H1 (cell line): ENCODE measurements at regions of chr4 and their contacts with region 1.

Region 1: DNA sequence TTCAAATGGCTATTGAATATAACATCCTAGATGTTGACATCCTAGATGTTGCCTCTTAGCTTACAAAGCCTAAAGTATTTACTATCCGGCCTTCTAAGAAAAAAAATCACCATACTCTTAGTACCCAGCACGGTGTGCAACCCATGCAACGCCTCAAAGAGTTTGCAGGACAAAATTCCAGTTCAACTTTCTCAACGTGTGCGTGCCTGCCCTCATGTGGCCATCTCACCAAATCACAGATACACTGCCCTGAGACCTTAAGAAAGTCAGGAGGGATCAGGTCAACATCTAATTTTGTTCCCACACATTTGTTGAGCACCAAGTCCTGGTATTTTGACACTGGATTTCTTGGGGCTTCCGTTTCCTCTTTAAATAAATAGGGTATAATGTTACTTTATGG is 68.3 kb downstream of the CRMP1 start:
- DNase-seq: no peak
- H3K4me3 ChIP-seq: no peak overlapping the region
- H3K27ac ChIP-seq: no peak overlapping the region
- H3K4me1 ChIP-seq: no peaks in the 10 kb centered on the region
- H3K27me3 ChIP-seq: no peaks in the 10 kb centered on the region; a peak in 1 of 7 replicates
- CTCF ChIP-seq: peak in 2 of 3 experiments; percentile 62 to 71; a peak in 3 of 4 replicates
- EP300 ChIP-seq: no peak
- POLR2A ChIP-seq: no peak
- RAD21 ChIP-seq: peak; percentile 55 to 57

Region 2: GRCh38 chr4:5619913-5620625 is 204.6 kb before region 1 on chr4:
- CTCF ChIA-PET with region 1: no interaction called
- POLR2A ChIA-PET with region 1: no interaction called
- DNase-seq: no peak
- H3K4me3 ChIP-seq: no peak overlapping the region
- H3K27ac ChIP-seq: no peak overlapping the region
- H3K4me1 ChIP-seq: no peaks in the 10 kb centered on the region
- H3K27me3 ChIP-seq: no peaks in the 10 kb centered on the region
- CTCF ChIP-seq: no peak
- EP300 ChIP-seq: no peak
- POLR2A ChIP-seq: no peak
- RAD21 ChIP-seq: no peak; a peak in 1 of 4 replicates

Region 3: GRCh38 chr4:5730993-5731990 is 93.3 kb before region 1 on chr4:
- CTCF ChIA-PET with region 1: no interaction called
- POLR2A ChIA-PET with region 1: no interaction called
- DNase-seq: no peak
- H3K4me3 ChIP-seq: no peak overlapping the region
- H3K27ac ChIP-seq: no peak overlapping the region
- H3K4me1 ChIP-seq: no peaks in the 10 kb centered on the region
- H3K27me3 ChIP-seq: no peaks in the 10 kb centered on the region
- CTCF ChIP-seq: no peak
- EP300 ChIP-seq: no peak
- POLR2A ChIP-seq: no peak
- RAD21 ChIP-seq: no peak

Region 4: DNA sequence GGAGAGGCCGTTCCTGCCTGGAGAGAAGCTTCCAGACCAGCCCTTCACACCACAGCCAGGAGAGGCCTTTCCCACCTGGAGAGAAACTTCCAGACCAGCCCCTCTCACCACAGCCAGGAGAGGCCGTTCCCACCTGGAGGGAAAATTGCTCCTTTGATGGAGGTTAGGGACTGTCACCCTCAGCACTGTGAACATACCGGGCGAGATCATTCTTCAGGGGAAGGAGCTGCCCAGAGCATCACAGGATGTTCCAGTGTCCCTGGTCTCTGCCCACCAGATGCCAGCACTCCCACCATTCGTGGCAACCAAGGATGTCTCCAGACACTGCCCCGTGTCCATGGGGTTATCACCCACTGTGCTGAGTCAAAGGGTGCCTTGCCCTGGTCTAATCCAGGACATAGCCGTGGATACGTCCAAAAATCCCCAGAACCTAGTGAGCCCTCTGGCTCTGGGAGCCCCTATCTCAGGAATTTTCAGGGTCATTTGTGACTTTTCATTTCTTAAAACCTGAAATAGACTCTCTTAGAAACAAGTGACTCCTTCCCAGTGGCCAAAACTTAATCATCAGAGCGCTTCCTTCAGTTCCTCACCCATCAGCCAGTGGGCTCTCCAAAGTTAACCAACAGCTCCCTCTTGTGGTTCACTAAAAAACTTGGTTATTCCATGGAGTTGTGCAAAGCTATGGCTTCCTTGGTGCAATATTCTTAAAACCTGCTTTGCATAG is 12.0 kb before region 1 on chr4:
- CTCF ChIA-PET with region 1: interaction called, 36 read pairs
- POLR2A ChIA-PET with region 1: interaction called, 3 read pairs
- DNase-seq: no peak
- H3K4me3 ChIP-seq: no peak overlapping the region
- H3K27ac ChIP-seq: no peak overlapping the region
- H3K4me1 ChIP-seq: no peaks in the 10 kb centered on the region; a peak in 1 of 7 replicates
- H3K27me3 ChIP-seq: no peaks in the 10 kb centered on the region; a peak in 1 of 7 replicates
- CTCF ChIP-seq: peak in 2 of 3 experiments; percentile 75 to 89; a peak in 3 of 4 replicates
- EP300 ChIP-seq: no peak
- POLR2A ChIP-seq: no peak
- RAD21 ChIP-seq: peak; percentile 82 to 90

Region 5: GRCh38 chr4:5836943-5837342 is 12.3 kb after region 1 on chr4:
- CTCF ChIA-PET with region 1: interaction called, 21 read pairs
- POLR2A ChIA-PET with region 1: interaction called, 3 read pairs
- DNase-seq: no peak
- H3K4me3 ChIP-seq: no peak overlapping the region
- H3K27ac ChIP-seq: no peak overlapping the region
- H3K4me1 ChIP-seq: no peaks in the 10 kb centered on the region
- H3K27me3 ChIP-seq: no peaks in the 10 kb centered on the region
- CTCF ChIP-seq: no peak
- EP300 ChIP-seq: no peak
- POLR2A ChIP-seq: no peak
- RAD21 ChIP-seq: no peak

Region 6: DNA sequence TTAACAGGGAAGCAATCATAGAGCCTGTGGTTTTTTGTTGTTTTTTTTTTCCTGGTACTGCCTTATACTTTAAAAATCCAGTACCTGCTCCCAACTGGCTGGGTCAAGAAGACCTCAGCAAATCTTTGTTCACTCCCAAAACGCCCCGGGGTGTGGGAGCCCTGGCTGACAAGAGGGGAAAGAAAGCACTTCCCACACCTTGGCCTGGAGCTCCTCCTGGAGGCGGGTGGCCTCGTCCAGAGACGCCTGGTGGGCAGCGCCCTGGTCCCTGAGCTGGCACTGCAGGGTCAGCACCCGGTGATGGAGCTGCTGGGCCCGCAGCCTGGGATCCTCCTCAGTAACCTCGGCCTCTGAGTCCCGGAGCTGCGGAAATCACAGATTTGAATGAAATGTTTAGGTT is 155.3 kb after region 1 on chr4:
- CTCF ChIA-PET with region 1: interaction called, 110 read pairs
- POLR2A ChIA-PET with region 1: interaction called, 3 read pairs
- DNase-seq: peak; percentile 56 to 87
- H3K4me3 ChIP-seq: no peak overlapping the region
- H3K27ac ChIP-seq: no peak overlapping the region
- H3K4me1 ChIP-seq: peaks cover 0 to 2% (median 0%) of the 10 kb centered on the region in 4 experiments; a peak in 1 of 7 replicates
- H3K27me3 ChIP-seq: no peaks in the 10 kb centered on the region
- CTCF ChIP-seq: peak; percentile 92 to 99 (median 92)
- EP300 ChIP-seq: no peak
- POLR2A ChIP-seq: no peak
- RAD21 ChIP-seq: peak; percentile 99 to 100